ENCODE measurements at regions of chr2 and their contacts with region 1.

Region 1: DNA sequence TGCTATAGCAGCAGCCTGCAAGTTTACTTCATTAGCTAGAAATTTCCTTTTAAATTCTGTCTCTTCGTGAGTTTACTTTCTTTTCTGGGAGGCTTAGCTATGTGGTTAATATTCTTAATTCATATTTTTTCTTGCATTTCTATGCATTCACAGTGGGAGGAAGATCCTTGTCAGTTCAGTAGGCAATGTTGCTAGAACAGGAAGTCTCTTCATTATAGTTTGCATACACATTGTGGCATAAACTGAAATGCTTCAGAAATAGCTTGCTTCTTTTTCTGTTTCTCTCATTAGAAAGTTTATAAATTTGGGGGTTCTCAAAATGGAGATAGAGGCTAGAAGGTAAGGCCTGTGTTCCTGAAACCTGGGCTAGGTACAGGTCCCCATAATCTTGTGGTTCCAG is 8.1 kb upstream of the ARHGAP15 start:
- DNase-seq: no peak
- ATAC-seq: peak; percentile 62
- H3K4me3 ChIP-seq: no peak overlapping the region
- H3K27ac ChIP-seq: peak overlapping the region; percentile 30
- H3K4me1 ChIP-seq: peaks cover 7% of the 10 kb centered on the region
- H3K27me3 ChIP-seq: no peaks in the 10 kb centered on the region
- CTCF ChIP-seq: no peak
- EP300 ChIP-seq: no peak
- POLR2A ChIP-seq: no peak
- RAD21 ChIP-seq: no peak

Region 2: DNA sequence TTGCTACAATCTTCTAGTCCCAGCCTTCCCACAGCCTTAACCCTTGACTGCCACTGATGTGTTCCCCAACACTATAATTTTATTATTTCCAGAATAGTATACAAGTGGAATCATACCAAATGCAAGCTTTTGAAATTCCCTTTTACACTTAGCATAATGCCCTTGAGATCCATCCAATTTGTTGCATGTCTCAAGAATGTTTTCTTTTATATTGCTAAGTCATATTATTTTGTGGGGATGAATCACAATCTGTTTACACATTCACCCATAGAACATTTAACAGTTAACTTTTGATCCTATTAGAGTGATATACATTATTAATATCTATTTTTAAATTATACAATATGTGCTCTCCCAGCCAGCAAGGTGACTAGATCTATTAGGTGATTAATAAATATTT is 317.9 kb before region 1 on chr2:
- CTCF ChIA-PET with region 1: no interaction called
- POLR2A ChIA-PET with region 1: no interaction called
- RAD21 ChIA-PET with region 1: no interaction called
- SMC1A ChIA-PET with region 1: no interaction called
- in situ Hi-C with region 1: no loop called
- intact Hi-C with region 1: no loop called
- DNase-seq: no peak
- ATAC-seq: no peak
- H3K4me3 ChIP-seq: no peak overlapping the region
- H3K27ac ChIP-seq: no peak overlapping the region
- H3K4me1 ChIP-seq: no peaks in the 10 kb centered on the region
- H3K27me3 ChIP-seq: no peaks in the 10 kb centered on the region
- CTCF ChIP-seq: no peak
- EP300 ChIP-seq: no peak
- POLR2A ChIP-seq: no peak
- RAD21 ChIP-seq: no peak

Region 3: GRCh38 chr2:143140864-143141661 is 20.0 kb after region 1 on chr2:
- CTCF ChIA-PET with region 1: interaction called, 88 read pairs
- POLR2A ChIA-PET with region 1: interaction called, 129 read pairs
- RAD21 ChIA-PET with region 1: interaction called, 4 read pairs
- SMC1A ChIA-PET with region 1: interaction called, 13 read pairs
- in situ Hi-C with region 1: no loop called
- intact Hi-C with region 1: no loop called
- DNase-seq: peak; percentile 71
- ATAC-seq: peak; percentile 87
- H3K4me3 ChIP-seq: peak overlapping the region; percentile 54
- H3K27ac ChIP-seq: peak overlapping the region; percentile 93
- H3K4me1 ChIP-seq: peaks cover 29% of the 10 kb centered on the region
- H3K27me3 ChIP-seq: no peaks in the 10 kb centered on the region
- CTCF ChIP-seq: no peak
- EP300 ChIP-seq: no peak
- POLR2A ChIP-seq: no peak
- RAD21 ChIP-seq: 0 out of 2 replicates have a peak, but pooled peaks have one; percentile 3